KBM-7 (cell line): ENCODE measurements at regions of chr3 and their contacts with region 1.

Region 1: GRCh38 chr3:15405448-15406050 is 21.8 kb downstream of the METTL6 start:
- DNase-seq: peak; percentile 66

Region 2: GRCh38 chr3:14947886-14948555 is 457.5 kb before region 1 on chr3:
- in situ Hi-C with region 1: loop called (anchors 25 kb)
- DNase-seq: peak; percentile 98